Right ventricle myocardium superior (tissue), 1 donor: ENCODE measurements at regions of chr5 and their contacts with region 1.

Region 1: DNA sequence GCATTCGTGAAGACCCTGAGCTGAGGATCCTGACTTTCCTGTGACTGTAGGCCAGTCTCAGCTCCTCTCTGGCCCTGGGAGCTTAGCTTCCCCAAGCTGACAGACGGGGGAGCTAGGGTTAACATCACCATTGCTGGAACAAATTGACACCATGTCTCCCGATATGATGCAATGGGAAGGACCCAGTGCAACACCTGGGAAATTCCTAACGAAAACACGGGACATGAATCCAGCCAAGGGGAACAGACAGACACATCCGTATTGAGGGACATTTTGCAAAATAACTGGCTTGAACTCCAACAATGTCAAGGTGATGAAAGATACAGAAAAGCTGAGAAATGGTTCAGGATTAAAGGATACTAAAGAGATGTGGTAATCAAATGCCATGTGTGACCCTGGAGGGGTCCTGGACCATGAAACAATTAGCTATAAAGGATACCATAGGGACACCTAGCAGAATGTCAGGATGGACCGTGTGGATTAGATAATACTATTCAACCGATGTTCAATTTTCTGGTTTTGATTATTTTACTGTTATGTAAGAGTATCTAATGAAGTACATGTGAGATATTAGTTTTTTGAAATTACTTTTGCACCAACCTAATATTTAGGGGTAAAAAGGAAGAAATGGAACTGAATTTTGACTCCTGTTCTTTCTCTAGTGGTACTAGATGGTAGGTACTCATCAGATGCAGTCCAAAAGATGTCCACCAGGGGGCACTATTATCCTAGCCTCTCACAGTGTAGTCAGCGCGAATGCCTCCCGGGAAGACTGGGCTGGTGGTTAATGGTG is 52.7 kb downstream of the NDST1 start:
- DNase-seq: peak; percentile 68
- ATAC-seq: peak; percentile 91

Region 2: DNA sequence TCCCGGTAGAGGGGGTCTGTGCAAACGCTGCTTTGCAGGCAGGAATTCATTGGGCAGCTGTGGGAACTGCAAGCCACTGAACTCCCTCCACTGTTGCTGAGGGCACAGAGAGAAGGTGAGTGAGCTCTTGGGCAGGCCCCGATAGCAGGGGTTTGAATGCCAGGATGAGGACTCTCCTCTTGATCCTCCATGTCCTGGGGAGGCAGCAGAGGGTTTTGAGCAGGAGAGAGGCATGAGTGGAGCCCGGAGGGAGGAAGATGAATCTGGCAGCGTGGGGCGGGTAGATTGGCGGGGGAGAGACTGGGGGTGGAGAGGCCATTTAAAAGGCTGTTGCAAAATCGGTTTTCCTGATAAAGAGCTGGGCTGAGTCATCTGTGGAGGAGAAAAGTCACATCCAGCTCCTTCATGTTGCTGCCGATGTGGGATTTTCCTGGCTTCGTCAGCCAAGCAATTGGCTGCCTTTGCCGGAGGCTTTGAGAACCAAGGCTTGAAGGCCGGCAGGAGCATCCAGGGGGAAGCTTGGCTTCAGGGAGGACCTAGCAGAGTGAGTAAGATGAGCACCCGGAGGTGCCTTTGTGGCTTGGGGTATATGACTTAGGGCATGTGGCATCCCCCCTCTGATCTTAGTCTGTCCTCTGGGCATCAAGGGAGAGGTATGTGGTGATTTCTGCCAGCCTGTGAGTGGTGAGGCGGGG is 79.9 kb after region 1 on chr5 and contains the start of gene SYNPO:
- intact Hi-C with region 1: no loop called
- DNase-seq: peak; percentile 82
- ATAC-seq: peak; percentile 62
- total RNA-seq, gene SYNPO: 645 TPM

Region 3: GRCh38 chr5:150656191-150657132 is 95.9 kb after region 1 on chr5:
- intact Hi-C with region 1: loop called (anchors 2 kb)
- DNase-seq: peak; percentile 85
- ATAC-seq: peak; percentile 76

Region 4: DNA sequence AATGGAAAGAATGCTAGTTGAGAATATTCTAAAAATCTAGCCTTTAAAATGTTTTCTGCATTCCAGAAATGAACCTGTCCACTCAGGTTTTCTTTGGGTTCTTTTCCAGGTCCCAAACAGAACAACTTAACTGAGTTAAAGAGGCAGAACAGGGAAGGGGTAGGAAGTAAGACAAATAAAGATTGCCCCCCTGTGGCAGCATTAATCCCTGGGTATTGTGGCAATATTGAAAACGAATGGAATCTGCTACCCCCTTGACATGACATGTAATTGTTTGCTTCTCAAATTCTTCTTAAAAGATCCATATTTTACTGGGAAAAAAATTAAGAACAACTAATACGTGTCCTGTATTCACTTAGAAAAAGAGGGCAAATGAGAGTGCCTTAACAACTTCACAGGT is 149.6 kb after region 1 on chr5:
- intact Hi-C with region 1: loop called (anchors 5 kb)
- DNase-seq: no peak
- ATAC-seq: no peak

Region 5: DNA sequence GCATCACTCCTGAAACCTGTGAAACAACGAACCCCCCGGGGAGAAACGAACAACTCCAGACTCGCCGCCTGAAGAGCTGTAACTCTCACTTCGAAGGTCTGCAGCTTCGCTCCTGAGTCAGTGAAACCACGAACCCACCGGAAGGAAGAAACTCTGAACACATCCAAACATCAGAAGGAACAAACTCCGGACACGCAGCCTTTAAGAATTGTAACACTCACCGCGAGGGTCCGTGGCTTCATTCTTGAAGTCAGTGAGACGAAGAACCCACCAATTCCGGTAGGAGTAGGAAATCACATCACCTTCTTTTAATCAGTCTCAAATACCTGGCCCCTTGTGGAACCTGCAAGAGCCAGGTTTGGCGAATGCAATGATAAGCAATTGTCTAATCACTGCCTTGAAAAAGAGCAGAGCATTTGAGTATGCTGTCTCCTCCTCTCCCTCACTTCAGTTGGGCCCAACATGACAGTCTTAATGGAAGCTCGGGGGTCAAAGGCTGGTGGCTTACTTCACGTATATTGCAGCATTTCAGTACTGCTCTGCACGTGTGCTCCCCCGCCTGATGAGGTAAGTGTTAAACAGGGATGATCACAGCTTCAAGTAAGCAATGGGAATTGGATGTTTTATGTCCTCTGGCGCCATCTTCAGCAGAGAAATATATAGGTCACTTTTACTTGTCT is 286.2 kb after region 1 on chr5:
- intact Hi-C with region 1: loop called (anchors 5 kb)
- DNase-seq: no peak
- ATAC-seq: peak; percentile 95